K562 (cell line): ENCODE measurements at regions of chr11 and their contacts with region 1.

Region 1: GRCh38 chr11:13772223-13773046 is 104.0 kb downstream of the FAR1 start:
- DNase-seq: peak; percentile 24 to 78 (median 28)
- ATAC-seq: peak; percentile 92
- H3K4me3 ChIP-seq: no peak overlapping the region
- H3K27ac ChIP-seq: no peak overlapping the region
- H3K4me1 ChIP-seq: no peaks in the 10 kb centered on the region; a peak in 1 of 5 replicates
- H3K27me3 ChIP-seq: 0 out of 5 replicates have a peak, but pooled peaks cover 0 to 2% of the 10 kb centered on the region in 2 experiments
- CTCF ChIP-seq: peak; percentile 61 to 82 (median 62); a peak in 5 of 6 replicates
- EP300 ChIP-seq: no peak
- POLR2A ChIP-seq: no peak
- RAD21 ChIP-seq: peak; percentile 90 to 94

Region 2: GRCh38 chr11:13440100-13440855 is 332.2 kb before region 1 on chr11:
- CTCF ChIA-PET with region 1: no interaction called
- POLR2A ChIA-PET with region 1: no interaction called
- in situ Hi-C with region 1: no loop called
- intact Hi-C with region 1: no loop called
- DNase-seq: no peak
- ATAC-seq: no peak
- H3K4me3 ChIP-seq: no peak overlapping the region
- H3K27ac ChIP-seq: no peak overlapping the region
- H3K4me1 ChIP-seq: no peaks in the 10 kb centered on the region
- H3K27me3 ChIP-seq: no peaks in the 10 kb centered on the region
- CTCF ChIP-seq: no peak
- EP300 ChIP-seq: no peak
- POLR2A ChIP-seq: no peak
- RAD21 ChIP-seq: no peak

Region 3: DNA sequence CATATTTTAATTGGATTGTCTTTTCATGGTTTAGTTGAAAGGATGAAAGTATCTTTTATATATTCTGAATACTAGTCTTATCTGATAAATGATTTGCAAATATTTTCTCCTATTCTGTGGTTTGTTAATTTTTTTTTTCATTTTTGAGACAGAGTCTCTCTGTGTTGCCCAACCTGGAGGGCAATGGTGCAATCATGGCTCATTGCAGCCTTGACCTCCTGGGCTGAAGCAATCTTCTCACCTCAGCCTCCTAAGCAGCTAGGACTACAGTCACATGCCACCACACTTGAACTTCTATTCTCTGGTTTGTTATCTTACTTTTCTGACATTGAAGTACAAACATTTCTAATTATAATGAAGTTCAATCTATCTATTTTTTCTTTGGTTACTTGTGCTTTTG is 134.0 kb before region 1 on chr11:
- CTCF ChIA-PET with region 1: no interaction called
- POLR2A ChIA-PET with region 1: no interaction called
- in situ Hi-C with region 1: no loop called
- intact Hi-C with region 1: no loop called
- DNase-seq: no peak
- ATAC-seq: no peak
- H3K4me3 ChIP-seq: no peak overlapping the region
- H3K27ac ChIP-seq: no peak overlapping the region
- H3K4me1 ChIP-seq: no peaks in the 10 kb centered on the region
- H3K27me3 ChIP-seq: no peaks in the 10 kb centered on the region
- CTCF ChIP-seq: no peak
- EP300 ChIP-seq: no peak
- POLR2A ChIP-seq: no peak
- RAD21 ChIP-seq: no peak

Region 4: DNA sequence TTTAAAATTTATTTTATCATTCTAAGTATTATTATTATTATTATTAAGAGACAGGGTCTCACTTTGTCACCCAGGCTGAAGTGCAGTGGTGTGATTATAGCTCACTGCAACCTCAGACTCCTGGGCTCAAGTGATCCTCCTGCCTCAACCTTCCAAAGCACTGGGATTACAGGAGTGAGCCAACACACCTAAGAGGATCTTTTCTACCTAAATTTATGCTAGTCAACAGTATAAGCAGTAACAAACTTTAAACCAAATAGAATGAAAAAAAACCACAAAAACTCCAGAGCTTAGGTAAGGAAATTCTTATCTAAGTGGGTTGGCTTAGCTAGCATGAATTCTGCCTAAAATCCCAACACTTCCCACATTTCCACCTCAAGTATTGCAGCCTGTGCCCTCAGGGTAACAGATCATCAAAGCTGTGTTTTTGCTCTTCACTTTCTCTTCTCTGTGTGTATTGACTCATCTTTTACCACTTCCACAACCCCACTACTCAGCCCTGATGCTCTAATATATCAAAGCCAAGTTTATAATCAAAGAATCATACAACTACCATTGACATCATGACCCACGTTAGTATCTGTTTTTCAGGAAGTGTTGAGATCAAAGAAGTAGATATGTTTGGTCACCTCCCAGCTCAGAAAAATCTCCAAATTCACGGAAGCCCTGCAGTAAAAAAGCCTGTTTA is 96.4 kb after region 1 on chr11:
- CTCF ChIA-PET with region 1: no interaction called
- POLR2A ChIA-PET with region 1: no interaction called
- in situ Hi-C with region 1: no loop called
- intact Hi-C with region 1: loop called (anchors 2 kb)
- DNase-seq: no peak
- ATAC-seq: no peak
- H3K4me3 ChIP-seq: no peak overlapping the region
- H3K27ac ChIP-seq: no peak overlapping the region
- H3K4me1 ChIP-seq: peaks cover 17 to 20% of the 10 kb centered on the region in 2 experiments
- H3K27me3 ChIP-seq: no peaks in the 10 kb centered on the region
- CTCF ChIP-seq: no peak
- EP300 ChIP-seq: no peak
- POLR2A ChIP-seq: no peak
- RAD21 ChIP-seq: no peak

Region 5: GRCh38 chr11:13949876-13950275 is 177.4 kb after region 1 on chr11:
- CTCF ChIA-PET with region 1: interaction called, 5 read pairs
- POLR2A ChIA-PET with region 1: no interaction called
- in situ Hi-C with region 1: loop called (anchors 5 kb)
- intact Hi-C with region 1: loop called (anchors 2 kb)
- DNase-seq: peak in 1 of 4 experiments; percentile 37
- ATAC-seq: no peak
- H3K4me3 ChIP-seq: no peak overlapping the region
- H3K27ac ChIP-seq: no peak overlapping the region
- H3K4me1 ChIP-seq: no peaks in the 10 kb centered on the region
- H3K27me3 ChIP-seq: peaks cover 5 to 8% of the 10 kb centered on the region in 2 experiments; a peak in 2 of 5 replicates
- CTCF ChIP-seq: peak in 1 of 3 experiments; percentile 55; a peak in 2 of 6 replicates
- EP300 ChIP-seq: no peak
- POLR2A ChIP-seq: no peak
- RAD21 ChIP-seq: peak; percentile 76 to 85

Region 6: DNA sequence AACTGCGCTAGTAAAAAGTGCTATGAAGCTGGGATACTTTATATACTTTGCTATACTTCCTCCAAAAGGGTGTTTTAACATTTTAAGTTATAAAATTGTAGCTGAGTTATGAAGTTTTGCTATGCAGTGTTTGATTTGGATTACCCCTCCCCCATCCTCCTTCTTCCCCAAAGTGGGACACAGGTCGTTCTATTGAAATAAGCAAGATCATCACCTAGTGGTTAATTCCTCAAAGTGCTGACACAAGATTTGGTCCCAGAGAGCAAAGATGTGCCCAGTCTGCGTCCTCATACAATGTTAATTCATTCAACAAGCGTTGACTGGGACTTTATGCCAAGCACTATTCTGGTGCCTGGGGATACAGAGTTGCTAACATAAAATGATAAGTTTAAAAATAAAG is 268.6 kb after region 1 on chr11:
- CTCF ChIA-PET with region 1: interaction called, 3 read pairs
- POLR2A ChIA-PET with region 1: no interaction called
- in situ Hi-C with region 1: no loop called
- intact Hi-C with region 1: loop called (anchors 1 kb)
- DNase-seq: peak; percentile 8 to 36 (median 28)
- ATAC-seq: peak; percentile 42; the same call in 1 of the 3 replicates
- H3K4me3 ChIP-seq: no peak overlapping the region
- H3K27ac ChIP-seq: no peak overlapping the region
- H3K4me1 ChIP-seq: no peaks in the 10 kb centered on the region
- H3K27me3 ChIP-seq: no peaks in the 10 kb centered on the region
- CTCF ChIP-seq: peak; percentile 38 to 58 (median 41); a peak in 3 of 6 replicates
- EP300 ChIP-seq: no peak
- POLR2A ChIP-seq: no peak
- RAD21 ChIP-seq: peak; percentile 28 to 57; a peak in 3 of 4 replicates

Region 7: DNA sequence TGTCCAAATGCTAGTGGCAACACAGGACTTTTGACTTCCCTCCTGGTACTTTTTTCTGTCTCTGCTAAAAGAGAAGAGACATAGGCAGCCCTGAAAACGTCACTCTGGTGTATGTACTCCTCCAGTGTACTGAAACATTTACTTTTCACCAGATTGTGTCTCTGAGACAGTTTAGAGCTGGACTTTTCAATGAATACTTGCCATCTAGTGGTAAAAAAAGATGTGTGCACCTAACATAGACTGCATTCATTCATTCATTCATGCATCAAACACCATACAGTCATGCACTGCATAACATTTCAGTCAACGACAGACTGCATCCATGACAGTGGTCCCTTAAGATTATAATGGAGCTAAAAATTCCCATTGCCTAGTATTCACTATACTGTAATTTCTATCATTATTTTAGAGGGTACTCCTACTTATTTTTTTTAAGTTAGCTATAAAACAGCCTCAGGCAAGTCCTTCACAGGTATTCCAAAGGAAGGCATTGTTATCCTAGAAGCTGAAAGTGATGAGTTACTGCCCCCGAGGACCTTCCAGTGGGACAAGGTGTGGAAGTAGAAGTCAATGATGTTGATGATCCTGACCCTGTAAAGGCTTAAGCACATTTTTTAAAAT is 376.3 kb after region 1 on chr11:
- CTCF ChIA-PET with region 1: interaction called, 10 read pairs
- POLR2A ChIA-PET with region 1: no interaction called
- in situ Hi-C with region 1: no loop called
- intact Hi-C with region 1: loop called (anchors 2 kb)
- DNase-seq: peak in 3 of 4 experiments; percentile 10 to 16 (median 14)
- ATAC-seq: peak; percentile 87
- H3K4me3 ChIP-seq: no peak overlapping the region
- H3K27ac ChIP-seq: no peak overlapping the region
- H3K4me1 ChIP-seq: no peaks in the 10 kb centered on the region
- H3K27me3 ChIP-seq: no peaks in the 10 kb centered on the region
- CTCF ChIP-seq: peak; percentile 33 to 59 (median 51); a peak in 4 of 6 replicates
- EP300 ChIP-seq: no peak
- POLR2A ChIP-seq: no peak
- RAD21 ChIP-seq: peak; percentile 54 to 69

Region 8: GRCh38 chr11:14249121-14249963 is 476.9 kb after region 1 on chr11:
- CTCF ChIA-PET with region 1: interaction called, 16 read pairs
- POLR2A ChIA-PET with region 1: no interaction called
- in situ Hi-C with region 1: loop called (anchors 5 kb)
- intact Hi-C with region 1: loop called (anchors 1 kb)
- DNase-seq: peak; percentile 62 to 68 (median 64)
- ATAC-seq: peak; percentile 83
- H3K4me3 ChIP-seq: no peak overlapping the region
- H3K27ac ChIP-seq: no peak overlapping the region
- H3K4me1 ChIP-seq: no peaks in the 10 kb centered on the region
- H3K27me3 ChIP-seq: peaks cover 11 to 54% of the 10 kb centered on the region in 2 experiments; a peak in 3 of 5 replicates
- CTCF ChIP-seq: peak; percentile 80 to 92 (median 80)
- EP300 ChIP-seq: no peak
- POLR2A ChIP-seq: no peak
- RAD21 ChIP-seq: peak; percentile 90 to 92